ENCODE measurements at regions of chr12 and their contacts with region 1.

Region 1: GRCh38 chr12:10779103-10779502 is 23.3 kb downstream of the TAS2R7 start:
- DNase-seq: no peak
- H3K4me3 ChIP-seq: no peak overlapping the region
- CTCF ChIP-seq: no peak
- POLR2A ChIP-seq: no peak

Region 2: GRCh38 chr12:11202811-11203210 is 423.7 kb after region 1 on chr12:
- intact Hi-C with region 1: loop called (anchors 5 kb)
- DNase-seq: no peak
- H3K4me3 ChIP-seq: no peak overlapping the region
- CTCF ChIP-seq: no peak
- POLR2A ChIP-seq: no peak

Measured in lower leg skin (tissue), 4 donors.